ENCODE measurements at regions of chr19 and their contacts with region 1.

Region 1: GRCh38 chr19:10870955-10871603 is at the start of gene CARM1:
- DNase-seq: peak; percentile 95 to 99 (median 98)
- H3K4me3 ChIP-seq: peak within 1 kb of the TSS; percentile 60 to 79 (median 60)
- H3K4me3 Mint-ChIP-seq: peak within 1 kb of the TSS; percentile 83 to 84
- H3K27ac ChIP-seq: peak within 1 kb of the TSS; percentile 50 to 51
- H3K27ac Mint-ChIP-seq: peak within 1 kb of the TSS; percentile 79 to 95 (median 91)
- H3K4me1 ChIP-seq: peaks cover 39 to 57% of the 10 kb centered on the region in 2 donors
- H3K4me1 Mint-ChIP-seq: peaks cover 41% of the 10 kb centered on the region
- H3K27me3 ChIP-seq: peaks cover 0 to 8% of the 10 kb centered on the region in 2 donors
- H3K27me3 Mint-ChIP-seq: peaks cover 7 to 8% (median 7%) of the 10 kb centered on the region in 3 donors
- CTCF ChIP-seq: peak; percentile 56
- polyA plus RNA-seq, gene CARM1: 0.17 to 26.3 (median 0.29) TPM

Region 2: DNA sequence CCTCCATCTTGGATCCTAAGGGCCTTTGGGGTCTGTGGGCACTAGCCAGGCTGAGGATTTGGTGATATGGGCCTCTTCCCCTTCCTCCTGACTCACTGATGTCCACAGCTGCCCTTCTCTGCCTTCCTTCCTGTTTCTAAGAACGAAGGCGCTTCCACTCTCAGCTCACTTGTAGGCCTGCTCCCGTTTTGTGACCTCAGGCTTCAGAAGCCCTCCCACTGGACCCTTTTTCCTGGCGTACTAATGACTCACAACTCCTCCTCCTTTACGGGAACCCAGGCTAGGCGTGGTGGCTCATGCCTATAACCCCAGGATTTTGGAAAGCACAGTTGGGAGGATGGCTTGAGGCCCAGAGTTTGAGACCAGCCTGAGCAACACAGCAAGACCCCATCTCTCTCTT is 90.7 kb before region 1 on chr19:
- intact Hi-C with region 1: loop called in 1 of 2 experiments (anchors 5 kb)
- DNase-seq: peak; percentile 91 to 98 (median 97)
- H3K4me3 ChIP-seq: peak overlapping the region in 1 of 3 experiments; percentile 33
- H3K4me3 Mint-ChIP-seq: peak overlapping the region in 1 of 2 donors; percentile 39
- H3K27ac ChIP-seq: peak overlapping the region; percentile 86 to 92
- H3K27ac Mint-ChIP-seq: peak overlapping the region; percentile 91 to 98 (median 97)
- H3K4me1 ChIP-seq: peaks cover 80 to 94% of the 10 kb centered on the region in 2 donors
- H3K4me1 Mint-ChIP-seq: peaks cover 70% of the 10 kb centered on the region
- H3K27me3 ChIP-seq: no peaks in the 10 kb centered on the region
- H3K27me3 Mint-ChIP-seq: no peaks in the 10 kb centered on the region
- CTCF ChIP-seq: no peak

Region 3: DNA sequence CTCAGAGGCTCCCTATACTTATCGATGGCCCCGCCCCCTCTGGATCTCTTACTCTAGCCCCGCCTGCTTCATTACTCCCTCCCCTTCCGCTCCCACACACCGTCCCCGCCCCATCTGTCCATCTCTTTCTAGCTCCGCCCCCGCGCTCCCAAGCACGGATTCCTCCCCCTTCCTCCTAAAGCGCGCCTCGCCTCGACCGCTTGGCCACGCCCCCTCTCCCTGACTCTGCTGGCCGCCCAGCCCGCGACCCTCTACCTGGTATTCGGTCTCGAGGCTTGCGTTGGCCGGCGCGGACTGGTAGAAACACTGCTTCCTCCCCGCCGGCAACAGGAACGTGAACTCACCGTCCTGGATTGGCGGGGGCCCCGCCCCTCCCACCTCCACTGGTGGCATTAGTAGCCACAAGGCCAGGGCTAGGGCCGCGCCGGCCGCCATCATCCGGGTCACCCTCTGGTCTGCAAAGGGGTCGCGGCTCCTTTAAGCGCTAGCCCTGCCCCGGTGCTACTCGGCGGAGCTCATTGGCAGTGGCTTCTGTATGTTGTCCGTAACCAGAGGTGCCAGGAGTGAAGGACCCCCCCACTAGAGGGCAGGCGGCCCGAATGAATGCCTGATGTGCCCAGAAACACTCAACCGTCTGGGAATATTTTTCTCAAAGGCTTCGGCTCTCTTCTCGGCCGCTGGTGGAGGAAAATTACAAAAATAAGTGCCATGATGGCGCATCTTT is 35.2 kb before region 1 on chr19 and contains the start of gene TMED1:
- intact Hi-C with region 1: loop called in 1 of 2 experiments (anchors 5 kb)
- DNase-seq: peak; percentile 98 to 99 (median 99)
- H3K4me3 ChIP-seq: peak within 1 kb of the TSS; percentile 50 to 86 (median 72)
- H3K4me3 Mint-ChIP-seq: peak within 1 kb of the TSS; percentile 93 to 95
- H3K27ac ChIP-seq: peak within 1 kb of the TSS; percentile 85 to 94
- H3K27ac Mint-ChIP-seq: peak within 1 kb of the TSS; percentile 97 to 100 (median 99)
- H3K4me1 ChIP-seq: peaks cover 15 to 18% of the 10 kb centered on the region in 2 donors
- H3K4me1 Mint-ChIP-seq: peaks cover 11% of the 10 kb centered on the region
- H3K27me3 ChIP-seq: no peaks in the 10 kb centered on the region
- H3K27me3 Mint-ChIP-seq: peaks cover 0 to 9% (median 3%) of the 10 kb centered on the region in 3 donors
- CTCF ChIP-seq: no peak
- polyA plus RNA-seq, gene TMED1: 23.2 to 56.7 (median 51.3) TPM

Region 4: GRCh38 chr19:10928525-10929401 is 57.7 kb after region 1 on chr19 and contains the starts of genes TIMM29 and YIPF2:
- intact Hi-C with region 1: loop called in 1 of 2 experiments (anchors 10 kb)
- DNase-seq: peak; percentile 89 to 92 (median 89)
- H3K4me3 ChIP-seq: peak within 1 kb of the TSS; percentile 75 to 97 (median 88)
- H3K4me3 Mint-ChIP-seq: peak within 1 kb of the TSS; percentile 92 to 94
- H3K27ac ChIP-seq: peak within 1 kb of the TSS; percentile 50 to 82
- H3K27ac Mint-ChIP-seq: peak within 1 kb of the TSS; percentile 79 to 95 (median 89)
- H3K4me1 ChIP-seq: peaks cover 18 to 21% of the 10 kb centered on the region in 2 donors
- H3K4me1 Mint-ChIP-seq: peaks cover 23% of the 10 kb centered on the region
- H3K27me3 ChIP-seq: no peaks in the 10 kb centered on the region
- H3K27me3 Mint-ChIP-seq: peaks cover 0 to 3% (median 0%) of the 10 kb centered on the region in 3 donors
- CTCF ChIP-seq: no peak
- polyA plus RNA-seq, gene TIMM29: 5.2 to 18.7 (median 14.1) TPM
- polyA plus RNA-seq, gene YIPF2: 12.3 to 25.2 (median 15.5) TPM

Region 5: DNA sequence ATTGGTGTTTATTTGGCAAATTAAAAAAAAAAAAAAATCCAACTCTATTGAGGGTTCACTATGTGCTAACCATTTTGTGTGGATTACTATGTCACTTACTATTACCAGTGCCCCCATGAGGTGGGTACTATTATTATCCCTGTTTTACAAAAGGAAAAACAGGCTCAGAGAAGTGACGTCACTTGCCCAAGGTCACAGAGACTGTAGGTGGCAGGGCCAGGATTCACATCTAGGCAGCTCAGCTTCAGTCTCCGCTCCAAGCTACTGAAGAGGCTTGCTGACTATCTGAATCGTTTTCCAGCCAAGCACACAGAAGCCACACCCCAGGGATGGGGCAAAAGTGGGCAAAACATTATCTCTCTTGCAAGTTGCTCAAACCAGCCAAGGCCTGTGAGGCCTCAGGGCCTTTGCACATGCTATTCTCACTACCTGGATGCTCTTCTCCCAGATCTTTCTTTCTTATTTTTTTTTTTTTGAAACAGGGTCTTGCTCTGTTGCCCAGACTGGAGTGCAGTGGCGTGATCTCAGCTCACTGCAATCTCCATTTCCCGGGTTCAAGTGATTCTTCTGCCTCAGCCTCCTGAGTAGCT is 363.5 kb after region 1 on chr19:
- intact Hi-C with region 1: no loop called
- DNase-seq: no peak
- H3K4me3 ChIP-seq: no peak overlapping the region
- H3K4me3 Mint-ChIP-seq: no peak overlapping the region
- H3K27ac ChIP-seq: no peak overlapping the region
- H3K27ac Mint-ChIP-seq: peak overlapping the region in 1 of 7 donors; percentile 5
- H3K4me1 ChIP-seq: no peaks in the 10 kb centered on the region
- H3K4me1 Mint-ChIP-seq: no peaks in the 10 kb centered on the region
- H3K27me3 ChIP-seq: no peaks in the 10 kb centered on the region
- H3K27me3 Mint-ChIP-seq: peaks cover 3 to 8% (median 8%) of the 10 kb centered on the region in 3 donors
- CTCF ChIP-seq: no peak

Measured in CD14-positive monocyte (primary cell).